SK-N-SH (cell line): ENCODE measurements at regions of chr2 and their contacts with region 1.

Region 1: GRCh38 chr2:45494269-45494977 is 116.6 kb downstream of the SRBD1 start:
- DNase-seq: peak; percentile 56
- H3K4me3 ChIP-seq: peak overlapping the region in 1 of 2 experiments; percentile 7; a peak in 1 of 4 replicates
- H3K27ac ChIP-seq: no peak overlapping the region; a peak in 1 of 4 replicates
- H3K4me1 ChIP-seq: peaks cover 0 to 4% of the 10 kb centered on the region in 2 experiments; a peak in 1 of 4 replicates
- H3K27me3 ChIP-seq: no peaks in the 10 kb centered on the region
- CTCF ChIP-seq: peak; percentile 93
- EP300 ChIP-seq: no peak
- RAD21 ChIP-seq: peak; percentile 97

Region 2: DNA sequence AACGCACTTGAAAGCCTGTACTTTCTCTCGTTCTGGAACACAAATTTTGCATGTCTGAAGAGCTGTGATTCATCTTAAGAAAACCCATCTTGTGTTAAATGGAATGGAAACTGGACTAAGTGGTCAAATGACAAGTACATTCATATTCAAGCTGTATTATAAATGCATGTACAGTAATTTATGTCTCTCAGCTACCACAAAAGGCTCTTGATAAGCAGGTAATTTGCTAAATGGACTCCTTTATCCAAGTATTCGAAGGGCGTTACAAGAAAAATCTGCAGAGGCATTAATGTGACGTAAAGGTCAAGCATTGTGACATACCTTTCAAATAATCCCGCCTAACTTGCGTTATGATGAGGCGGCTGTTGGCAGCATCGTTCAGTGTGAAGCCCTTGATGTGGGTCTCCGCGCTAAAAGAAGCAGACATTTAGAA is 1589.0 kb before region 1 on chr2:
- CTCF ChIA-PET with region 1: no interaction called
- POLR2A ChIA-PET with region 1: no interaction called
- DNase-seq: no peak
- H3K4me3 ChIP-seq: no peak overlapping the region
- H3K27ac ChIP-seq: no peak overlapping the region; a peak in 1 of 4 replicates
- H3K4me1 ChIP-seq: peaks cover 0 to 7% of the 10 kb centered on the region in 2 experiments; a peak in 1 of 4 replicates
- H3K27me3 ChIP-seq: no peaks in the 10 kb centered on the region
- CTCF ChIP-seq: no peak
- EP300 ChIP-seq: no peak
- RAD21 ChIP-seq: no peak

Region 3: GRCh38 chr2:44974064-44974715 is 520.2 kb before region 1 on chr2:
- CTCF ChIA-PET with region 1: interaction called, 318 read pairs
- POLR2A ChIA-PET with region 1: no interaction called
- DNase-seq: peak; percentile 83
- H3K4me3 ChIP-seq: no peak overlapping the region
- H3K27ac ChIP-seq: no peak overlapping the region
- H3K4me1 ChIP-seq: peaks cover 0 to 7% of the 10 kb centered on the region in 2 experiments; a peak in 1 of 4 replicates
- H3K27me3 ChIP-seq: no peaks in the 10 kb centered on the region
- CTCF ChIP-seq: peak; percentile 70
- EP300 ChIP-seq: no peak
- RAD21 ChIP-seq: peak; percentile 90

Region 4: DNA sequence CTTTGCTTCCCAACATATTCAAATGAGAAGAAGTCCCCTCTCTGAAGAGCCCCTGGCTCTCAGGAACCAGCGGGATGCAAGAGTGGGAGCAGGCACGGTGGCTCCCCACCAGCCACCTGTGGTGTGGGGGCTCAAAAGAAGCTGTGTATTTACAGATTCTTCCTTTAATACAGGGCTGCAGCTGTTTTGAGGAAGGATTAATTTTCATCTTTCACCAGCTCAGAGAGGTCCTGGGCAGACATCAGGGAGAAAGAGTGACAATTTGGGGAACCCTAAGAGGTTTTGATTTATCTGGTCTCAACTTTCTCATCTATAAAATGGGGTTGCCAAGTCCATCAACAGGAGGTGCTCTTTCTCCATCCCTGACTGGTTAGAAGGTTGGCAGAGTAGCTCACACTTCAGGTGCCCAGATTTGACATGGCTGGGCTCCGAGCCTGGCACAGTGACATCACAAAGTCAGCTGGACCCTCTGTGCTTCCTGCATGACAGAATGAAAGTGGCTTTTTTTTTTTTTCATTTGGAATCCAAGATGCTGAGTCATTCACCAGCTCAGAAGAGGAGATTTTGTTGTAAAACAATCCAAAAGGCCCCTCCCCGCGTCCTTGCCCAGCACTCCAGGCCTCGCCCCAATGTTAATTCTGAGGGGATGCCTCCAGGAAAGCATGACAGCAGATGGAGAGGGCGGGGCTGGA is 469.7 kb before region 1 on chr2:
- CTCF ChIA-PET with region 1: interaction called, 22 read pairs
- POLR2A ChIA-PET with region 1: no interaction called
- DNase-seq: no peak
- H3K4me3 ChIP-seq: no peak overlapping the region
- H3K27ac ChIP-seq: no peak overlapping the region
- H3K4me1 ChIP-seq: no peaks in the 10 kb centered on the region; a peak in 1 of 4 replicates
- H3K27me3 ChIP-seq: no peaks in the 10 kb centered on the region
- CTCF ChIP-seq: peak; percentile 67
- EP300 ChIP-seq: peak in 1 of 2 experiments; percentile 82; a peak in 2 of 4 replicates
- RAD21 ChIP-seq: peak; percentile 52

Region 5: GRCh38 chr2:45169339-45170190 is 324.9 kb before region 1 on chr2:
- CTCF ChIA-PET with region 1: interaction called, 17 read pairs
- POLR2A ChIA-PET with region 1: no interaction called
- DNase-seq: peak; percentile 89
- H3K4me3 ChIP-seq: peak overlapping the region; percentile 54 to 62
- H3K27ac ChIP-seq: no peak overlapping the region; a peak in 1 of 4 replicates
- H3K4me1 ChIP-seq: peaks cover 14% of the 10 kb centered on the region in 2 experiments
- H3K27me3 ChIP-seq: no peaks in the 10 kb centered on the region
- CTCF ChIP-seq: no peak
- EP300 ChIP-seq: no peak
- RAD21 ChIP-seq: no peak

Region 6: DNA sequence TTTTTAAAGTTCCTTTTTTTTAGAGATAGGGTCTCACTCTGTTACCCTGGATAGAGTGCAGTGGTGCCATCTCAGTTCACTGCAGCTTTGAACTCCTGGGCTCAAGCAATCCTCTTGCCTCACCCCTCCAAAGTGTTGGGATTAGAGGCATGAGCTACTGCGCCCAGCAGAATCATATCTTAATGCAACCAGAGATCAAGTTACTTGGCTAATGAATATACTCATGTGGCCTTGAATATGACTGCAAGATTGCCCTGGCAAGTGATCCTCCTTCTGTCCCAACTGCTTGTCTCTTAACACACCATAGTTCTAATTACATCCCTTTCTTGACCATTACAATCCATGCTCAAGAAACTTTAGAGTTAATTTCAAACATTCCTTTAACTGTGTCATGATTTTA is 16.9 kb before region 1 on chr2:
- CTCF ChIA-PET with region 1: interaction called, 27 read pairs
- POLR2A ChIA-PET with region 1: no interaction called
- DNase-seq: no peak
- H3K4me3 ChIP-seq: no peak overlapping the region
- H3K27ac ChIP-seq: no peak overlapping the region
- H3K4me1 ChIP-seq: no peaks in the 10 kb centered on the region
- H3K27me3 ChIP-seq: no peaks in the 10 kb centered on the region
- CTCF ChIP-seq: no peak
- EP300 ChIP-seq: no peak
- RAD21 ChIP-seq: no peak

Region 7: DNA sequence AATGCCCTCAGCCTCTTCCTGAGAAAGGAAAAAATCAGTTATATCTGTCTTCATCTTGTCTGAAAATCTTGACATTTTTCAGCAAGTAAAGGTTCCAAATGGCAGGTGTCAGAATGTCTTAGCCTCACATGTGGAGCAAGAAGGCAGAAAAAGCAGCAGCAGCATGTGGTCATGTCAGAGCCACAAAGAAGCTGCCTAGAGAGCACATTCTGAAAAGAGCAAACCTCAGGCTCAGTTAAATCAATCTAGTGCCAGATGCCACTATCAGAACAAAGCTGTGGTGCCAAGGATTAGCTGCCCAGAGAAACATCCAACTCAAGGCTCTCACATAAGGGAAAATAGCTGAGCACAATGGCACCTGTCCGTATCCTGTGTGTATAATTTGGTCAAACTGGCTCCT is 10.7 kb after region 1 on chr2:
- CTCF ChIA-PET with region 1: interaction called, 50 read pairs
- POLR2A ChIA-PET with region 1: no interaction called
- DNase-seq: no peak
- H3K4me3 ChIP-seq: no peak overlapping the region
- H3K27ac ChIP-seq: no peak overlapping the region
- H3K4me1 ChIP-seq: no peaks in the 10 kb centered on the region; a peak in 1 of 4 replicates
- H3K27me3 ChIP-seq: no peaks in the 10 kb centered on the region
- CTCF ChIP-seq: no peak
- EP300 ChIP-seq: no peak
- RAD21 ChIP-seq: no peak

Region 8: DNA sequence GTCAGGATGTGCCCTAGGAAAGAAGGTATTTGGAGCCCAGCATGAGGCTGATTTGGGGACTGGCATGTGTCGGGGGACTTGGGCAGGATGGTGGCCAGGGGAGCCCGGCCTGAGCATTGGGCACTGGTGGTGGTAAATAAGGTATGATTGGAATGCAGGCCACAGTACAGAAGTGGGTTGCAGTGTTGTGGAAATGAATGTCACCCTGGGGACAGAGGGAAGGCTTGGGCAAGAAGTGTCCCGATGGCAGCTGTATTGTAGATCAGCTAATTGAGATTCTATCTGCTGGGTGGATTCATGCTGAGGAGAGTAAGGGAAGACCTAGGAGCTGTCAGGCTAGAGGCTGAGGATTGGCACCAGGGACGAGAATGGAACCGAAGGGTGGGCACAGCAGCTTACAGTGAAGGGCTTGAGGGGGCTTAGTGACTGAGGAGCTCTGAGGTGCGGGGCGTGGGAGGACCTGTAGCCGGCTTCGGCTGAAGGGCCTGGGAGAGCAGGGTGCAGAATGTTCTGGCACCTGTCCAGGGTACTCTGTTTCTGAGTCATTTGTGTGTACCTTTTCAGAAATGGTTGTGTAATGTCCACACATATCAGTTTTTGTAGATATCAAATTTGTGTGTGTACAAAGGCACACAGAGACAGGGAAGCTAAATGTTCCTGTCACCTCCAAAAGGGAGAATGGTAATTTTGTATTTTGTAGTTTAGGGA is 327.3 kb after region 1 on chr2:
- CTCF ChIA-PET with region 1: no interaction called
- POLR2A ChIA-PET with region 1: no interaction called
- DNase-seq: no peak
- H3K4me3 ChIP-seq: no peak overlapping the region
- H3K27ac ChIP-seq: peak overlapping the region in 1 of 2 experiments; percentile 23; a peak in 1 of 4 replicates
- H3K4me1 ChIP-seq: peaks cover 13 to 40% of the 10 kb centered on the region in 2 experiments; a peak in 2 of 4 replicates
- H3K27me3 ChIP-seq: no peaks in the 10 kb centered on the region
- CTCF ChIP-seq: no peak
- EP300 ChIP-seq: no peak
- RAD21 ChIP-seq: no peak